Caco-2 (cell line): ENCODE measurements at regions of chr22 and their contacts with region 1.

Region 1: GRCh38 chr22:20079745-20080444 is at the start of gene DGCR8:
- DNase-seq: peak; percentile 94 to 97
- H3K4me3 ChIP-seq: peak within 1 kb of the TSS; percentile 62
- H3K4me3 Mint-ChIP-seq: peak within 1 kb of the TSS; percentile 79
- H3K27ac Mint-ChIP-seq: peak within 1 kb of the TSS; percentile 92
- H3K4me1 ChIP-seq: peaks cover 23% of the 10 kb centered on the region
- H3K4me1 Mint-ChIP-seq: peaks cover 22% of the 10 kb centered on the region
- H3K27me3 ChIP-seq: no peaks in the 10 kb centered on the region
- H3K27me3 Mint-ChIP-seq: no peaks in the 10 kb centered on the region
- CTCF ChIP-seq: no peak
- total RNA-seq, gene DGCR8: 53.1 and 60.0 TPM in 2 replicates

Region 2: GRCh38 chr22:19641254-19641982 is 438.5 kb before region 1 on chr22:
- CTCF ChIA-PET with region 1: no interaction called
- POLR2A ChIA-PET with region 1: no interaction called
- intact Hi-C with region 1: no loop called
- DNase-seq: peak; percentile 14 to 26
- H3K4me3 ChIP-seq: no peak overlapping the region
- H3K4me3 Mint-ChIP-seq: no peak overlapping the region
- H3K27ac Mint-ChIP-seq: no peak overlapping the region
- H3K4me1 ChIP-seq: no peaks in the 10 kb centered on the region
- H3K4me1 Mint-ChIP-seq: no peaks in the 10 kb centered on the region
- H3K27me3 ChIP-seq: no peaks in the 10 kb centered on the region
- H3K27me3 Mint-ChIP-seq: peaks cover 15% of the 10 kb centered on the region
- CTCF ChIP-seq: peak; percentile 23 to 27

Region 3: DNA sequence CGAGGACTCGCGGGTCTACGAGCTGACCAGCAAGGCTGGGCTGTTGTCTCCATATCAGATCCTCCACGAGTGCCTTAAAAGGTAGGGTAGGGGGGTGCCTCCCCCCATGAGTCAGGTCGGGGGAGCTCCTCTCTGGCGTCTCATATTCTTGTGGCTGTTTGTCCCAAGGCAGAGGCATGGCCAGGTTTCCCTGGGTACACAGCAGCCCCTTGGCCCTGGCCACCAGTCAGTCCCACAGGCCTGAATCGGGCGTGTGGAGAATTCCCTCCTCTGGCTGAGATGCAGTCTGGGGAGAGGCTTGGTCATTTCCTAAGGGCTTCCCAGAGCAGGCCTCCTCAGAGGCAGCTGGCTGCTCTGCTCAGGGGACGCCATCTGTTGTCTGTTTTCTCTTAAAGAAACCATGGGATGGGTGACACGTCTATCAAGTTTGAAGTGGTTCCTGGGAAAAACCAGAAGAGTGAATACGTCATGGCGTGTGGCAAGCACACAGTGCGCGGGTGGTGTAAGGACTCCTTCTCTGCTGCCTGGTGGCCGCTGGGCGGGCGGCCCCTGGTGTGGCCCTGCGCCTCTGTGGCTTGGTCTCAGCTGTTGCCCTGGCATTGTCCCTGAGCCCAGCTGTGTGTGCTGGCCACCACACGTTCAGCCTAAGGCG is 26.4 kb after region 1 on chr22:
- CTCF ChIA-PET with region 1: no interaction called
- POLR2A ChIA-PET with region 1: no interaction called
- intact Hi-C with region 1: no loop called
- DNase-seq: no peak
- H3K4me3 ChIP-seq: no peak overlapping the region
- H3K4me3 Mint-ChIP-seq: no peak overlapping the region
- H3K27ac Mint-ChIP-seq: no peak overlapping the region
- H3K4me1 ChIP-seq: no peaks in the 10 kb centered on the region
- H3K4me1 Mint-ChIP-seq: no peaks in the 10 kb centered on the region
- H3K27me3 ChIP-seq: no peaks in the 10 kb centered on the region
- H3K27me3 Mint-ChIP-seq: no peaks in the 10 kb centered on the region
- CTCF ChIP-seq: no peak

Region 4: GRCh38 chr22:20116951-20117645 is 37.2 kb after region 1 on chr22 and contains the start of gene TRMT2A:
- CTCF ChIA-PET with region 1: no interaction called
- POLR2A ChIA-PET with region 1: interaction called, 5 read pairs
- intact Hi-C with region 1: loop called (anchors 1 kb)
- DNase-seq: peak; percentile 97 to 99
- H3K4me3 ChIP-seq: peak within 1 kb of the TSS; percentile 87
- H3K4me3 Mint-ChIP-seq: peak within 1 kb of the TSS; percentile 81
- H3K27ac Mint-ChIP-seq: peak within 1 kb of the TSS; percentile 87
- H3K4me1 ChIP-seq: peaks cover 22% of the 10 kb centered on the region
- H3K4me1 Mint-ChIP-seq: peaks cover 6% of the 10 kb centered on the region
- H3K27me3 ChIP-seq: no peaks in the 10 kb centered on the region
- H3K27me3 Mint-ChIP-seq: no peaks in the 10 kb centered on the region
- CTCF ChIP-seq: peak in 1 of 2 experiments; percentile 17
- total RNA-seq, gene TRMT2A: 41.1 and 43.0 TPM in 2 replicates

Region 5: GRCh38 chr22:20128902-20129746 is 49.2 kb after region 1 on chr22:
- CTCF ChIA-PET with region 1: no interaction called
- POLR2A ChIA-PET with region 1: no interaction called
- intact Hi-C with region 1: no loop called
- DNase-seq: peak in 1 of 2 experiments; percentile 49
- H3K4me3 ChIP-seq: no peak overlapping the region
- H3K4me3 Mint-ChIP-seq: peak overlapping the region; percentile 19
- H3K27ac Mint-ChIP-seq: no peak overlapping the region
- H3K4me1 ChIP-seq: no peaks in the 10 kb centered on the region
- H3K4me1 Mint-ChIP-seq: no peaks in the 10 kb centered on the region
- H3K27me3 ChIP-seq: no peaks in the 10 kb centered on the region
- H3K27me3 Mint-ChIP-seq: no peaks in the 10 kb centered on the region
- CTCF ChIP-seq: peak; percentile 40 to 46

Region 6: DNA sequence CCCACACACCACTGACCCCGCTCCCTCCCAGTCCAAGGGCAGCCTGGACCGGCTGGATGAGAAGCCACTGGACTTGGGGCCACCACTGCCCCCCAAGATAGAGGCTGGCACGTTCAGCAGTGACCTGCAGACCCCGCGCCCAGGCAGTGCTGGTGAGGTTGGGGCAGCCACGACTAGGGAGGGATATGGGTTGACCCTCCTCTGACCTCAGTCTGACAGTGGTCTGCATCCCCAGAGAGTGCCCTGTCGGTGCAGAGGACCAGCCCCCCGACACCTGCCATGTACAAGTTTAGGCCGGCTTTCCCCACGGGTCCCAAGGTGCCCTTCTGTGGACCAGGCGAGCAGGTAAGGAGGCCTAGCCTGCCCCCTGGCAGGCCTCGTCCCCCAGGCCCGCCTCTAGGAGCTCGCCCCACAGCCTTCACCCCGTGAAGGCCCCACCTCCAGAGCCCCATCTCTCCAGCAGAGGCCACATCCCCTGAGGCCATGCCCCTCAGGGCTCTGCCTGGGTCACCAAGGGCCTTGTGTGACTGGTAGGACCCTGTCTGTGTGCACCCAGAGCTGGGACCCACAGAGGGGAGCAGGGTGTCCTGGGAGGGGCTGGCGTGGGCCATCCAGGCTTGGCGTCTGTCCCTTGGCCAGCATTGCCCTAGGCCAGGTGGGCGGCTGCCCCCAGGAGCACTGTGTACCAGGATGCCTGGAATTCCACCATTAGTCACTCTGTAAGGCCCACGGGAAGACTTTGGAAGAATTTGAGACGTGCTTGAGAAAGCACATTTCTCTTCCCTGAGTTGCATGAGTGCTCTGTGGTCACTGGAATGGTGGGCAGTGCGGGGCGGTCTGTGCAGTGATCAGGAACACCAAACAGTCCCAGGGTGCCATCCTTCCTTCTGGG is 61.5 kb after region 1 on chr22:
- CTCF ChIA-PET with region 1: no interaction called
- POLR2A ChIA-PET with region 1: no interaction called
- intact Hi-C with region 1: no loop called
- DNase-seq: no peak
- H3K4me3 ChIP-seq: no peak overlapping the region
- H3K4me3 Mint-ChIP-seq: no peak overlapping the region
- H3K27ac Mint-ChIP-seq: no peak overlapping the region
- H3K4me1 ChIP-seq: no peaks in the 10 kb centered on the region
- H3K4me1 Mint-ChIP-seq: no peaks in the 10 kb centered on the region
- H3K27me3 ChIP-seq: no peaks in the 10 kb centered on the region
- H3K27me3 Mint-ChIP-seq: no peaks in the 10 kb centered on the region
- CTCF ChIP-seq: no peak